GM13976 (cell line): ENCODE measurements at regions of chr17 and their contacts with region 1.

Region 1: DNA sequence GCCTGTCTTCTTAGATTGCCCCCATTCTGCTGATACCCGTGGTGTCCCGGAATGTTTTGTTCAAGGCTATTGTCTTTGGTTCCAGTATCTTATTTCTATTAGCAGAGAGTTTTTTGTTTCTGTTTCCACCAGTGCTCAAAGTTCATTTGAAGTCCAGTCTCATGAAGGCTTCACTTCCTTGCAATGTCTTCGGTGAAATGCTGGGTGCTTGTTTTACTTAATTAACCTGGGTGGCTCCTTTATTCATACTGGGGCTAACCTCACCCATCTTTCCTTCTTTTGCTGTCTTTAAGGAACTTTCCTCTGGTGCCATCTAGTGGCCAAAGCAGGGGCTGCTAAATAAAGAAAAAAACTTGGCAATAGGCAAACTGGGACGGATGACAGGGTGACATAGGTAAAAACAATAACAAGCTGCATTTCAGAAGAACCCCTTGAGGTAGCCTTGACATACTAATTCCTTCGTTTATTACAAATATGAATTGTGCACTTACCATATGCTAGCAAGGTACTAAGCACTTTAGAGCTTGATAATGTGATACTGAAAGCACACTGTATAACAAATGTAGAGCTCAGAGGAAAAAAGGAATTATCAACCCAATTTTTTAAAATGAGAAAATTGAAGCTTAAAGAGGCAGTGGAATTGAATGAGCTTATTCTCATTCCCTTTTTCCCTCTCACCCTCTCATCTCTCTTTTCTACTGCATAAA is 2.8 kb upstream of the SMIM36 start:
- DNase-seq: peak; percentile 63
- CTCF ChIP-seq: peak; percentile 81

Region 2: GRCh38 chr17:55356434-55357328 is 157.4 kb before region 1 on chr17:
- in situ Hi-C with region 1: loop called (anchors 10 kb)
- DNase-seq: peak; percentile 68
- CTCF ChIP-seq: peak; percentile 76

Region 3: GRCh38 chr17:55612691-55613141 is 98.7 kb after region 1 on chr17:
- in situ Hi-C with region 1: no loop called
- DNase-seq: no peak
- CTCF ChIP-seq: no peak

Region 4: GRCh38 chr17:55635253-55635914 is 121.3 kb after region 1 on chr17:
- in situ Hi-C with region 1: no loop called
- DNase-seq: no peak
- CTCF ChIP-seq: no peak